Pancreas (tissue), 10 donors: ENCODE measurements at regions of chr7 and their contacts with region 1.

Region 1: DNA sequence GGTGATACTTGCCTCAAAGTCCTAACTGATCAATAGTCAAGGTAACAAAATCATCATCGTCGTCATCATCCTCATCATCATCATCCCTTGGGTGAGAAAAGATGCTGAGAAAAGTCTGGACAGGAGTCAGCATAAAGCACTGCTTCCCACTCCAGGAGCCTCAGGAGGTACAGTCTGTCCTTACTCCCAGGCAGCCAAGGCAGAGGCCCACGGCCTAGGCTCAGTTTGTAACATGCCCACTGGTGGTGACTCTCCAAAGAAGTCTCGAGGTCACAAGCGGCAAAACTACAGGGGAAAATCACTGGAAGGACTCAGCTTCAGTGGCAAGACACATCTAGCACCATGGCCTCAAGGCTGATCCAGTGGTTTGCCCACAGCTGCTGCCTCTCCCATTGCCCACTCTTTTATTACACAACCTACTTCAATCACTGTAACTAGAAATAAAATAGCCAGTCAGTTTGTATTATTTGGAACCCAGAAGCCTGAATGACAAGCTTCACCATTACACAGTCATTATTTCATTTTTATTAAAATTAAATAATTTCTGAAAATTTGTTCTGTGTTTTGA is 150.4 kb downstream of the SRPK2 start:
- DNase-seq: no peak
- ATAC-seq: peak in 2 of 4 donors; percentile 29 to 44
- H3K4me3 ChIP-seq: no peak overlapping the region
- H3K27ac ChIP-seq: no peak overlapping the region
- H3K4me1 ChIP-seq: peaks cover 0 to 7% (median 5%) of the 10 kb centered on the region in 3 donors
- H3K27me3 ChIP-seq: no peaks in the 10 kb centered on the region
- CTCF ChIP-seq: no peak

Region 2: DNA sequence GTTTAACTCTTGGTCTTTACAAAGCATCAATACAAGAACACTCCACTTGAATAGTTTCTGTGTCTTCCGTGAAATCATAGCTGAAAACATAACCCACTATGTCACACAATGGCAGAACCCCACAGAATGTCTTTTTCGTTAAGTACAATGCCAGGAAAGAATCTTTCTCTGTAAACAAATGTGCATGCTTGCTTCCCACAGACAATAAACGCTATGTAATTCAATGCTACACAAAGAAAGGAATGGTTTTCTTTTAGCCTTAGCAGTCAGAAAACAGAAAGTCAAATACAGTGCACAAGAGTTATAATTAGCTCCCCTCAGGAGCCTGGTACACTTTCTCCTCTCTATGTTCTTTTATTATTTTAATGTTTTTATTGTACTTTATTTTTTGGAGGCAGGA is 35.7 kb before region 1 on chr7:
- intact Hi-C with region 1: loop called in 1 of 3 experiments (anchors 5 kb)
- DNase-seq: no peak
- ATAC-seq: no peak
- H3K4me3 ChIP-seq: no peak overlapping the region
- H3K27ac ChIP-seq: no peak overlapping the region
- H3K4me1 ChIP-seq: peaks cover 0 to 5% (median 0%) of the 10 kb centered on the region in 3 donors
- H3K27me3 ChIP-seq: no peaks in the 10 kb centered on the region
- CTCF ChIP-seq: no peak

Region 3: DNA sequence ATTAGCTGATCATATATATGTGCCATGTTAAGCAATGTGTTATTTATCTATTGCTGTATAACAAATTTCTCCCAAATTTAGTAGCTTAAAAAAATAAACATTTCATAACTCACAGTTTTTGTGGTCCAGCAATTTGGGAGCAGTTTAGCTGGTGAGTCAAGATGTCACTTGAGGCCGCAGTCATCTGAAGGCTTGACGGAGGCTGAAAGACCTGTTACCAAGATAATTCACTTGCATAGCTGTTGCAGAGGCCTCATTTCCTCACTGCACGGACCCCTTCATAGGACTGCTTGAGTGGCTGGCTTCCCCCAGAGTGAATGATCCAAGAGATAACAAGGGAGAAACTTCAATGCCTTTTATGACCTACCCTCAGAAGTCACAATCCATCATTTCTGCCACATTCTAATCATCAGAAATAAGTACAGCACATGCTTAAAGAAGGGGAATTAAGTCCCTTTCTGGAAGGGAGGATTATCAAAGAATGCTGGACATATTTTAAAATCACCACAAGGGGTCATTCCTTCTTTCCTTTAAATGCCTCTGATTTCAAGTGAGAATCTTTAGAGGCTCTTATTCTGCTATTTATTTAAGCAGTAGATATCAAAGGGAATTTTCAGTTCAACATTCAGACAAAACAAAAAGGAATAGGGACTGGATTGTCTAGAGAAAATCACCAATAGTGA is 160.9 kb after region 1 on chr7:
- intact Hi-C with region 1: no loop called
- DNase-seq: no peak
- ATAC-seq: no peak
- H3K4me3 ChIP-seq: no peak overlapping the region
- H3K27ac ChIP-seq: no peak overlapping the region
- H3K4me1 ChIP-seq: no peaks in the 10 kb centered on the region
- H3K27me3 ChIP-seq: no peaks in the 10 kb centered on the region
- CTCF ChIP-seq: peak in 1 of 4 donors; percentile 11